Vagina (tissue), 2 donors: ENCODE measurements at regions of chrX and their contacts with region 1.

Region 1: DNA sequence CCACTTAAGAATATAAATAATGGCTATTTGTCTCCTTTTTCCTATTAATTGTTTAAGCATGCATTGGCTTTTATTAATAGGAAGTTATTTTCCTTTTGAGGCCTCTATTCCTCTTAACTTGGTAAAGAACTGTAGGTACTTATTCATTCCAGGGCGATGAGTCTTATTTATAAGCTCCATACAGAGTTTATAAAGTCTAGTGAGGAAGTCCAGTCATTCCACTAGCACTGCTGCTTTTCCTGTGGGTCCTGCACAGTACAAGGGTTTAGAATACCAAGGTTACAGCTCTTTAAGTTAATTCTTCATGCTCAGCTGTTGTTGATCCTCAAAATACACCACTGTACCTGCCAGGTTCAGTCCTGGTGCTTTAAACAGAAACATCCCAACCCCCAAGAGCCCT is 28.5 kb upstream of the WNK3 start:
- DNase-seq: no peak
- H3K4me3 ChIP-seq: no peak overlapping the region
- H3K27ac ChIP-seq: no peak overlapping the region
- H3K4me1 ChIP-seq: no peaks in the 10 kb centered on the region
- H3K27me3 ChIP-seq: no peaks in the 10 kb centered on the region
- CTCF ChIP-seq: no peak
- POLR2A ChIP-seq: no peak

Region 2: DNA sequence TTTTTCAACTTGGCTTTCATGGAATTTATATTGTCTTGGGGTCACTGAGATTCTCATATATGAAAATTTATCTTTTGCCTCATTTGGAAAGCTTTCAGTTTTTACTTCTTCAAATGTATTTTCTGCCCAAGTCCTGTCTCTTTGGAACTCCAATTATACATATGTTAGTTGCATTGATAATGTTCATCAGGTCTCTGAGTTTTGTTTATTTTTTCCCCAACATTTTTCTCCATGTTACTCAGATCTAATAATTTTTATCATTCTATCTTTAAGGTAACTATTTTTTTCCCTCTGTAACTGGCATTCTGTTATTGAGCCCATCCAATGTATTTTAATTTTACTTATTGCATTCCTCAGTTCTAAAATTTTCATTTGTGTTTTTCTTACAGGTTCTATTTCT is 523.6 kb after region 1 on chrX:
- intact Hi-C with region 1: loop called (anchors 5 kb)
- DNase-seq: no peak
- H3K4me3 ChIP-seq: no peak overlapping the region
- H3K27ac ChIP-seq: no peak overlapping the region
- H3K4me1 ChIP-seq: no peaks in the 10 kb centered on the region
- H3K27me3 ChIP-seq: no peaks in the 10 kb centered on the region
- CTCF ChIP-seq: no peak
- POLR2A ChIP-seq: no peak